Mammary epithelial cell (primary cell): ENCODE measurements at regions of chr17 and their contacts with region 1.

Region 1: DNA sequence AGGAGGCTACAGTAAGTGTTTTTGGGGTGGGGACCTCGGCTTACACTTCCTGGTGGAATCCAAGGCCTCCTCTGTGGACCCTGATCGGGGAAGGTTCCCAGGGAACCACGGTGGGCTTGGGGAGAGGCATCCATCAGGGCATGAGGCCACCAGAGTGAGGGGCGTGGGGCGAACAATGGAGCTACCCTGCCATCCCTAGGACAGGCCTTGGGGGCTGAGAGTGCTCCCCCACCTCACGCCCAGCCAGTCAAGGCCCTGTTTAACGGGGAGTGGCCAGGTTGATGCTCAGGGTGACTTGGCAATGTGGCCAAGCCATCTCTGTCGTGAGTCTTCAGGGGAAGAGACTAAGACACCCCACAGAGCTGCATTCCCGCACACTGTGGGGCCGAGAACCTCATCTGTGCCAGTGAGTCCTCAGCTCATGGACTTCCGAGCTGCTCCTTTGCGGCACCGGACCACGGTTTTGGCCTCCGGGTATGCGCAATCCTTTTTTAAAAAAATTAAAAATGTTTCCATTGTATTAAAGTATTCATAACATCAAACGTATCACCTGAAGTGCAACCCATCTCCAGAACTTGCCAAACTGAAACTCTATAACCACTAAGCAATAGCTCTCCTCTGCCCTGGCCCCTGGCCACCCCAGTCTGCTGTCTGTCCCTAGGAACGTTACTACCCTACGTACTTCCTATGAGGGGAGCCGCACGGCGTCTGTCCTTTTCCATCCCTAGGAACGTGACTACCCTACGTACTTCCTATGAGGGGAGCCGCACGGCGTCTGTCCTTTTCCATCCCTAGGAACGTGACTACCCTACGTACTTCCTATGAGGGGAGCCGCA is 71.8 kb upstream of the DOC2B start:
- DNase-seq: no peak
- H3K4me3 ChIP-seq: no peak overlapping the region
- H3K27ac ChIP-seq: no peak overlapping the region
- H3K4me1 ChIP-seq: no peaks in the 10 kb centered on the region
- H3K27me3 ChIP-seq: no peaks in the 10 kb centered on the region
- CTCF ChIP-seq: no peak

Region 2: DNA sequence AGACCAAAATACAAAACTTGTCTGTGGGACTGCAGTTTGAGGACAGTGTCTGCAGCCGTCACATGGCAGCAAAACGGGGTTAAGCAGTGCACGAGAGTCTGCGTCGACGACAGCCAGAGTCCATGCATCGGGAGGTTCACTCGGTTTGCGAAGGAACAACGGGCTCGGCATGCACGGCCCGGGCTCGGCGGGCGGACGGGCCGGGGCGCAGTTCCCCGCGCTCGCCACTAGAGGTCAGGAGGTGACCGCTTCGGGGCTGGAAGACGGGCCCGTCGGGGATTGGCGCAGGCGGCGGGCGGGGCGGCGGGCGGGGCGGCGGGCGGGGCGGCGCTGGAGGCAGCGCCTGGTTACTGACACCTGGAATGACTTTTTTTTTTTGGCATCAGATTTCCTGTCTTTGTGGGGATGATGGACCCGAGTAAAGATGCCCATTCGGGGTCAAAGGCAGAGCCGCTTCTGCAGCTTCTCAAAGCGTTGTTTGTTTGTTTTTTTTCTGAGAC is 109.4 kb before region 1 on chr17:
- CTCF ChIA-PET with region 1: no interaction called
- dilution Hi-C with region 1: no loop called
- in situ Hi-C with region 1: no loop called
- intact Hi-C with region 1: no loop called
- DNase-seq: peak; percentile 61
- H3K4me3 ChIP-seq: no peak overlapping the region
- H3K27ac ChIP-seq: no peak overlapping the region
- H3K4me1 ChIP-seq: no peaks in the 10 kb centered on the region
- H3K27me3 ChIP-seq: no peaks in the 10 kb centered on the region
- CTCF ChIP-seq: peak; percentile 26 to 66

Region 3: GRCh38 chr17:193841-194806 is 59.1 kb before region 1 on chr17:
- CTCF ChIA-PET with region 1: no interaction called
- dilution Hi-C with region 1: no loop called
- in situ Hi-C with region 1: no loop called
- intact Hi-C with region 1: no loop called
- DNase-seq: no peak
- H3K4me3 ChIP-seq: no peak overlapping the region
- H3K27ac ChIP-seq: no peak overlapping the region
- H3K4me1 ChIP-seq: no peaks in the 10 kb centered on the region
- H3K27me3 ChIP-seq: no peaks in the 10 kb centered on the region
- CTCF ChIP-seq: no peak

Region 4: DNA sequence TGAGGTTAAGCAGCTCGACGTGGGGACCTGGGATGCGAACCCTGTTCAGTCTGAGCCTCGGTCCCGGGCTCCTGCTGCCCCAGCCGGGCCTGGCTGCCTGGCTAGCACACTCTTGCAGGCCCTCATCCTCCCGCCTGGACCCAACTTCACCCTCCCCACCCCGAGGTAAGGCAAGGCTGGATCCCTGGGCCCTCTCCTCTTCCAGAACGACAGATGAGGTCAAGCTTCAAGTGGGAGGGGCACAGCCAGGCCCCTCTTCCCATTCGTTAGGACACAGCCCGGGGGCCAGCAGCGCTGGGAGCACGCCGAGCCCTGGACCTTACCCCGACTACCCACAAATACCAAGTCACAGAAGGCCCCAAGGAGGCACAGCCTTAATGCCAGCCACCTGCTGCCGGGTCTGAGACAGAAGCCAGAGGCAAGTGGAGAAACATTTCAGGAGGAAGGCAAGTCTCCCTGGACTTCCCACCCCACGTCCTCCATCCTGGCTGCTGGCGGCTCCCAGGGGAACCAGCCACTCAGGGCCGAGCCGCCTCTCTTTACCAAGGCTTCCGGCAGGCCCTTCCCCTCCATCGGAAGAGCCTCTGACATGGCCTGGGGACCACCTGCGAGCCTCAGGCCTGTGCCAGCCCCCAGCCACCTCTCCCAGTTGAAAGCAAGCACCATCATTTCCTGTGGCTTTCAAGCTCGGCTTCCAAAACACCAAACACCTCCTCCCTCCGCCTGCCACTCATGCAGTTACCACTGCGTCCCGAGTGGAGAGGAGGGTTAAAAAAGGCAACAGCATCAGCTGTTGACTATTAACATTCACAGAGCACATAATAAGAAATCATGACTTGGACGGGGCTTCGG is 39.5 kb after region 1 on chr17:
- CTCF ChIA-PET with region 1: no interaction called
- dilution Hi-C with region 1: loop called (anchors 5 kb)
- in situ Hi-C with region 1: no loop called
- intact Hi-C with region 1: no loop called
- DNase-seq: no peak
- H3K4me3 ChIP-seq: no peak overlapping the region
- H3K27ac ChIP-seq: no peak overlapping the region
- H3K4me1 ChIP-seq: no peaks in the 10 kb centered on the region
- H3K27me3 ChIP-seq: no peaks in the 10 kb centered on the region
- CTCF ChIP-seq: no peak